CD14-positive monocyte (primary cell): ENCODE measurements at regions of chr5 and their contacts with region 1.

Region 1: GRCh38 chr5:42994246-42995151 is 45.6 kb downstream of the ANXA2R start:
- DNase-seq: peak; percentile 90 to 96 (median 92)
- H3K4me3 ChIP-seq: peak overlapping the region; percentile 79 to 88 (median 85)
- H3K4me3 Mint-ChIP-seq: peak overlapping the region; percentile 96 to 100
- H3K27ac ChIP-seq: peak overlapping the region; percentile 97 to 99
- H3K27ac Mint-ChIP-seq: peak overlapping the region; percentile 100
- H3K4me1 ChIP-seq: peaks cover 22 to 29% of the 10 kb centered on the region in 2 donors
- H3K4me1 Mint-ChIP-seq: peaks cover 28% of the 10 kb centered on the region
- H3K27me3 ChIP-seq: peaks cover under 1 to 5% of the 10 kb centered on the region in 2 donors
- H3K27me3 Mint-ChIP-seq: peaks cover 9 to 11% (median 9%) of the 10 kb centered on the region in 3 donors
- CTCF ChIP-seq: peak; percentile 88

Region 2: DNA sequence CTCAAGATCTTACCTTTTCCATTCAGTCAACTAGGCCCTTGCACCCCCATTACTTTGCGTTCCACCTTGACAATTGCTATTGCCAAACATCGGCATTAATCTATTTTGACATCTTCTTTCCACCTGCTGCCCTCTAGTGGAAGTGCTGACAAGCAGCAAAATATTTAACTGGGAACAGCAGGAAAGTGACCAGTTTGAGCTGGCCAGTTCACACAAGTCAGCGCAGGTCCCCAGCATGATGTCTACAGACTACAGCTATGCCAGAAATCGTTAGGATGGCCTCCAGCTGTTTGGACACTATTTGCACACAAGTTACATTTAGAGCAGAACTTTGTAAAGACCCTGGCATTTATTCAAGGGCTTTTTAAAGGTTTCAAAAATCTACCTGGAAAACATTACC is 411.2 kb before region 1 on chr5:
- intact Hi-C with region 1: no loop called
- DNase-seq: peak; percentile 25 to 47 (median 45)
- H3K4me3 ChIP-seq: no peak overlapping the region
- H3K4me3 Mint-ChIP-seq: no peak overlapping the region
- H3K27ac ChIP-seq: no peak overlapping the region
- H3K27ac Mint-ChIP-seq: no peak overlapping the region
- H3K4me1 ChIP-seq: no peaks in the 10 kb centered on the region
- H3K4me1 Mint-ChIP-seq: peaks cover 5% of the 10 kb centered on the region
- H3K27me3 ChIP-seq: no peaks in the 10 kb centered on the region
- H3K27me3 Mint-ChIP-seq: peaks cover 2 to 5% (median 4%) of the 10 kb centered on the region in 3 donors
- CTCF ChIP-seq: peak; percentile 89

Region 3: DNA sequence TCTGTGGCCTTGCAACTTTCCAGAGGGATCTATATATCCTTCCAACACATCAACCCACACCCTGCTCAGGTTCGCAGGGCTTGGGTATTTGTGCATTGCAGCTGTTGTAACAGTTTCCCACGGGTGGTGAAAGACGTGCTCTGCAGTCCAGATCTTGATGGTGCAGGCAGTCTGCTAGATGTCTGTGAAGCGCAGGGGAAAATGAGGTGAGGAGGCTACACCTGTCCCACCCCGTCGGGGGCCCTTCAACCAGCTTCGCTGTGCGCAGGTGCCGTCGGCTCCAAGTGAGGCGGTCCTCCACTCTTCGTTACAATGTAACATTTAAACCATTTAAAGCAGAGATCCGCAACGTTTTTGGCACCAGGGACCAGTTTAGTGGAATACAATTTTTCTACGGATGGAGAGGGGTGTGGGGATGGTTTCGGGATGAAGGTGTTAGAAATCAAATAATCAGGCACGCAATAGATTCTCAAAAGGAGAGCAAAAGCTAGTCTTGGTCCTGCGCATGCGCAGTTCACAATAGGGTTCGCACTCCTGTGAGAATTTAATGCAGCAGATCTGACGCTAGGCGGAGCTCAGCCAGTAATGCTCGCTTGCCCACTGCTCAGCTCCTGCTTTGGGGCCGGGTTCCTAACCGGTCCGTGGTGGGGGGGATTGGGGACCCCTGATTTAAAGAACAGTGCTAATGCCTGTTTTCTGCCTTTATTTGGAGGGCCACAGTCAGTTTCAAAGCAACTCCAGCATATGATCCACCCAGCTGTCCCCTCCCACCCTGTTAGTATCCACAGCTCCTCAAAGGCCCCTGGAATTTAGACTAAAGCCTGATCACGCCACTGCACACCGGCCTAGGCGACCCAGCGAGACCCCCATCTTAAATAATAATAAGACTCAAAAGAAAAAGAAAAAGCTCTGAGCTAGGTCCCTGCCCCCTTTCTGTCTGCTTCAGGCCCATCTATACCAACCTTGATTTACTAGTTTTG is 85.7 kb before region 1 on chr5:
- intact Hi-C with region 1: loop called in 1 of 2 experiments (anchors 5 kb)
- DNase-seq: peak; percentile 78 to 94 (median 87)
- H3K4me3 ChIP-seq: peak overlapping the region; percentile 39 to 76 (median 54)
- H3K4me3 Mint-ChIP-seq: peak overlapping the region; percentile 85 to 97
- H3K27ac ChIP-seq: peak overlapping the region in 1 of 2 donors; percentile 34
- H3K27ac Mint-ChIP-seq: peak overlapping the region; percentile 13 to 76 (median 44)
- H3K4me1 ChIP-seq: peaks cover 7 to 11% of the 10 kb centered on the region in 2 donors
- H3K4me1 Mint-ChIP-seq: peaks cover 12% of the 10 kb centered on the region
- H3K27me3 ChIP-seq: no peaks in the 10 kb centered on the region
- H3K27me3 Mint-ChIP-seq: peaks cover 1 to 2% (median 2%) of the 10 kb centered on the region in 3 donors
- CTCF ChIP-seq: peak; percentile 86

Region 4: DNA sequence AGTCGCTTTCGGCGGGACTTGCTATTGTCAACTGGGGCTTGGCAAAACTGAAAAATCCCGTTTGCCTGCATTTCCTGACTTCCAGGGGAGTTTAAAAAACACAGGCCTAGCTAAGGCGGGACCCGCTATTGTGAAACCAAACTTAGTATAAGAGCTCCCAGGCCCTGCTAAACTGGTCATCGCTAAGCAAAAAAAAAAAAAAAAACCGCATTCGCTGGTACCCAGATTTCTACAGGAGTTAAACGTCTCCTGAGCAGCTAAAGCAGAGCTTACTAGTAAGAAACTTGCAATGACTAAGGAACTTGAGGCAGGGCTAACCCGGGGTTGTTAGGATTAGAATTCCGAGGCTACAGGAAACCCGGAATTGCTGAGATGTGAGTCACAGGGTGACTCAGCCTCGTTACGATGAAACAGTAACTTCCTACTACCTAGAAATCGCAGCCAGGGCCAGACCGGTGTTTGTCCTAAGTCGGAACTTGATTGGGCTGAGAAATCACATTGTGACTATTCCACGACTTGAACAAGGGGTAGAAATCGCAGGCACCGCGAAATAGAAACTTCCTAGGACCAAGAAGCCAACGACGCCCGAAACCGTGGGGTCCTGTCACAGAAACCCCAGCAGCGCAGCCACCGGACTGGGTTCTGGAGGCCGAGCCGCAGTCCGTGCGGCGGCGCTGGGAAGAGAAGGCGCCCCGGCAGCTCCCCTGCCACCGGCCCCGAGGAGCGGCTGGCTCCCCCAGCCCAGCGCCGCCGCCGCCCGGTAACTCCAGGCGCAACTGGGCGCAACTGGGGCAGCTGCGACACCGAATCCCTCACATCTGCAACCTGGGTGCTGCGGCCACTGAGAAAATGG is 43.8 kb before region 1 on chr5:
- intact Hi-C with region 1: loop called (anchors 2 kb)
- DNase-seq: peak; percentile 97 to 99 (median 99)
- H3K4me3 ChIP-seq: peak overlapping the region; percentile 66 to 79 (median 67)
- H3K4me3 Mint-ChIP-seq: peak overlapping the region; percentile 91 to 95
- H3K27ac ChIP-seq: peak overlapping the region; percentile 84 to 93
- H3K27ac Mint-ChIP-seq: peak overlapping the region; percentile 91 to 98 (median 96)
- H3K4me1 ChIP-seq: peaks cover 39 to 46% of the 10 kb centered on the region in 2 donors
- H3K4me1 Mint-ChIP-seq: peaks cover 40% of the 10 kb centered on the region
- H3K27me3 ChIP-seq: peaks cover 0 to 29% of the 10 kb centered on the region in 2 donors
- H3K27me3 Mint-ChIP-seq: peaks cover 16 to 36% (median 29%) of the 10 kb centered on the region in 3 donors
- CTCF ChIP-seq: no peak

Region 5: GRCh38 chr5:43008369-43009153 is 14.1 kb after region 1 on chr5:
- intact Hi-C with region 1: loop called in 1 of 2 experiments (anchors 1 kb)
- DNase-seq: peak; percentile 84 to 90 (median 89)
- H3K4me3 ChIP-seq: peak overlapping the region; percentile 58 to 96 (median 86)
- H3K4me3 Mint-ChIP-seq: peak overlapping the region; percentile 88 to 96
- H3K27ac ChIP-seq: peak overlapping the region; percentile 97
- H3K27ac Mint-ChIP-seq: peak overlapping the region; percentile 97 to 100 (median 99)
- H3K4me1 ChIP-seq: peaks cover 38 to 57% of the 10 kb centered on the region in 2 donors
- H3K4me1 Mint-ChIP-seq: peaks cover 40% of the 10 kb centered on the region
- H3K27me3 ChIP-seq: no peaks in the 10 kb centered on the region
- H3K27me3 Mint-ChIP-seq: peaks cover 0 to 2% (median 0%) of the 10 kb centered on the region in 3 donors
- CTCF ChIP-seq: no peak

Region 6: DNA sequence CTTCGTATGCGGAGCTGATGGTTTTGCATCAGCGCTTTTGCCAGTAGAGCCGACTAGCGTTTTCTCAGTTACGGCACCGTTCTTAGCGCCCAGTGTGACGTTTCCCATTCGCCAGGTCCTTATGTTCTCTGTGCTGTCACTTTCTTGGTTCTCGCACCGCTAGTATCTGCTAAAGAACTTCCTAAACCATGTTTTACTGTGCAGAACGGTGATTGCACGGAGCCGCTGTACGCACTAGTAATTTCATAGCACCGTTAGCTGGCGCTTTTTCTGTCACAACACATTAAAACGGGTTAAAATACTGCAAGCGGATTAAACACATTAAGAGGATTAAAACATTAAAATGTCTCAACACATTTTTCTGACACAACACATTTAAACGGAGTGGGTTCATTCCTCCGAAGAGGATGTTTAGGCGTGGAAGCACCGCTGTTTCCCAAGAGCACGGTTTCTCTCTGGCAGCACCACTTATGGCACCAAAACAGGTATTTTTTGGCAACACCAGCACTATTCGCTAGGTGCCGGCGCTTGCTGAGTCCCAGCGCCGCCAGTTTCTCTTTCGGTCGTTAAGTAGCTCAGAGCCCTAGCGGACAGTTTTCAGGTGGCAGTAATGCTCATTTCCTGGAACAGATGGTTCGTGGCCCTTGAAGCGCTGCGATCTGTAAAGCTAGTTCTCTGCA is 25.3 kb after region 1 on chr5:
- intact Hi-C with region 1: loop called in 1 of 2 experiments (anchors 1 kb)
- DNase-seq: peak; percentile 84 to 90 (median 85)
- H3K4me3 ChIP-seq: peak overlapping the region; percentile 75 to 99 (median 80)
- H3K4me3 Mint-ChIP-seq: peak overlapping the region; percentile 95 to 97
- H3K27ac ChIP-seq: peak overlapping the region; percentile 97 to 99
- H3K27ac Mint-ChIP-seq: peak overlapping the region; percentile 96 to 100 (median 99)
- H3K4me1 ChIP-seq: peaks cover 16 to 18% of the 10 kb centered on the region in 2 donors
- H3K4me1 Mint-ChIP-seq: peaks cover 29% of the 10 kb centered on the region
- H3K27me3 ChIP-seq: no peaks in the 10 kb centered on the region
- H3K27me3 Mint-ChIP-seq: peaks cover 0 to 2% (median 0%) of the 10 kb centered on the region in 3 donors
- CTCF ChIP-seq: peak; percentile 62

Region 7: GRCh38 chr5:43040287-43041098 is 46.0 kb after region 1 on chr5 and contains the start of gene ANXA2R:
- intact Hi-C with region 1: loop called (anchors 1 kb)
- DNase-seq: peak; percentile 90 to 96 (median 92)
- H3K4me3 ChIP-seq: peak within 1 kb of the TSS; percentile 67 to 81 (median 70)
- H3K4me3 Mint-ChIP-seq: peak within 1 kb of the TSS; percentile 90 to 95
- H3K27ac ChIP-seq: peak within 1 kb of the TSS; percentile 100
- H3K27ac Mint-ChIP-seq: peak within 1 kb of the TSS; percentile 97 to 100 (median 98)
- H3K4me1 ChIP-seq: peaks cover 36 to 43% of the 10 kb centered on the region in 2 donors
- H3K4me1 Mint-ChIP-seq: peaks cover 47% of the 10 kb centered on the region
- H3K27me3 ChIP-seq: no peaks in the 10 kb centered on the region
- H3K27me3 Mint-ChIP-seq: no peaks in the 10 kb centered on the region
- CTCF ChIP-seq: peak; percentile 87
- polyA plus RNA-seq, gene ANXA2R: 2.3 to 6.4 (median 3.1) TPM

Region 8: DNA sequence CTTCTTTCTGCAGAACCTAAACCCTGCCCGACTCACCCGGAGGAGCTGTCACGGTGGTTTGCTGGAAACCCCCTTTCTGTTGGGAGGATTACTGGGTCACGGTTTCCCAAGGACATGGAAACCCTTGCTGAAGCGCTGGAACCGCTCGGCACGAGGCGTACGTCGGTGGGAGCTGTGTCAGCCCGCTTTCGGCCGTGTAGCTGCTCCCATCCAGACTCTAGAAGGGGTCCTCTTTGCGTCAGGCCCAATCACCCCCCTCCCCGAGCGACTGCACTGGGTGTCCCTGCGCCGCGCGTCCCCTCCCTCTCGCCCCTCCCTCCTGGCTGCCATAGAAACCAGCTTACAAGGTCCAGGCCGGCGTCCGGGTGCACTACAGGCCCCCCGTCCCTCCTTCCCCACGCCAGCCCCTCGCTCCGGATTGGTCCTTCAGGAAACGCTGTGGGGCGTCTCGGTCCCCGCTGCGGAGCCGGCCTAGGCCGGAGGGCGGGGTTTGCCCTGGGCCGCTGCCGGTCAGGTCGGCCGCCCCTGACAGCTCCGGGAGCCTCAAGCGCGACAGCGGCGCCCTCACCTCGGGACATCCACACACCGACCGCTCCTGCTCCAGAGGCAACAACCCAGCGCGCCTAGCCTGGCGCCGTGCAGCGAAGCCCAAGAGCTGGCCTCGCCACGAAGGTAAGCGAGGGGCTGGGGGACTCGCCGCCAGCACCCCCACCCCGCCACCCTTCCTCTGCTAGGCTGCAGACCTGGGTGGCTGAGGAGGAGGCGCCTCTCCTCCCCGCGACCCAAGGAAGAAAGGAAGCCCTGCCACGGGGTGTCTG is 197.4 kb after region 1 on chr5 and contains the start of gene NIM1K:
- intact Hi-C with region 1: loop called in 1 of 2 experiments (anchors 10 kb)
- DNase-seq: peak; percentile 38 to 80 (median 52)
- H3K4me3 ChIP-seq: peak within 1 kb of the TSS; percentile 21 to 64 (median 25)
- H3K4me3 Mint-ChIP-seq: peak within 1 kb of the TSS; percentile 82 to 90
- H3K27ac ChIP-seq: peak within 1 kb of the TSS in 1 of 2 donors; percentile 40
- H3K27ac Mint-ChIP-seq: peak within 1 kb of the TSS; percentile 57 to 89 (median 84)
- H3K4me1 ChIP-seq: peaks cover 24 to 29% of the 10 kb centered on the region in 2 donors
- H3K4me1 Mint-ChIP-seq: peaks cover 28% of the 10 kb centered on the region
- H3K27me3 ChIP-seq: peaks cover 25 to 33% of the 10 kb centered on the region in 2 donors
- H3K27me3 Mint-ChIP-seq: peaks cover 35 to 47% (median 42%) of the 10 kb centered on the region in 3 donors
- CTCF ChIP-seq: no peak
- polyA plus RNA-seq, gene NIM1K: 0.13 TPM in 1 of 3 donors, not detected in the others